ENCODE measurements at regions of chr19 and their contacts with region 1.

Region 1: GRCh38 chr19:38004521-38005223 is 97.7 kb downstream of the SIPA1L3 start:
- DNase-seq: peak; percentile 81
- ATAC-seq: peak; percentile 85
- H3K4me3 ChIP-seq: peak overlapping the region; percentile 42 to 51
- H3K27ac ChIP-seq: peak overlapping the region; percentile 85
- H3K4me1 ChIP-seq: peaks cover 39 to 66% of the 10 kb centered on the region in 2 experiments
- H3K27me3 ChIP-seq: no peaks in the 10 kb centered on the region
- CTCF ChIP-seq: no peak
- POLR2A ChIP-seq: peak; percentile 77
- RAD21 ChIP-seq: no peak

Region 2: GRCh38 chr19:37931881-37932655 is 72.6 kb before region 1 on chr19:
- CTCF ChIA-PET with region 1: no interaction called
- POLR2A ChIA-PET with region 1: interaction called, 18 read pairs
- RAD21 ChIA-PET with region 1: interaction called in 1 of 2 experiments, 6 read pairs
- intact Hi-C with region 1: no loop called
- DNase-seq: peak; percentile 65
- ATAC-seq: peak; percentile 81
- H3K4me3 ChIP-seq: peak overlapping the region; percentile 30 to 49
- H3K27ac ChIP-seq: peak overlapping the region; percentile 88
- H3K4me1 ChIP-seq: peaks cover 61 to 87% of the 10 kb centered on the region in 2 experiments
- H3K27me3 ChIP-seq: no peaks in the 10 kb centered on the region
- CTCF ChIP-seq: no peak
- POLR2A ChIP-seq: no peak
- RAD21 ChIP-seq: peak; percentile 39; the same call in 1 of the 2 replicates

Region 3: GRCh38 chr19:37987356-37988332 is 17.0 kb before region 1 on chr19:
- CTCF ChIA-PET with region 1: interaction called, 4 read pairs
- POLR2A ChIA-PET with region 1: interaction called, 17 read pairs
- RAD21 ChIA-PET with region 1: no interaction called
- intact Hi-C with region 1: no loop called
- DNase-seq: no peak
- ATAC-seq: peak; percentile 73
- H3K4me3 ChIP-seq: no peak overlapping the region
- H3K27ac ChIP-seq: no peak overlapping the region
- H3K4me1 ChIP-seq: peaks cover 17 to 74% of the 10 kb centered on the region in 2 experiments
- H3K27me3 ChIP-seq: no peaks in the 10 kb centered on the region
- CTCF ChIP-seq: peak; percentile 51 to 64 (median 64); a peak in 5 of 6 replicates
- POLR2A ChIP-seq: no peak
- RAD21 ChIP-seq: peak; percentile 51

Region 4: GRCh38 chr19:37992761-37993160 is 11.9 kb before region 1 on chr19:
- CTCF ChIA-PET with region 1: interaction called, 4 read pairs
- POLR2A ChIA-PET with region 1: interaction called, 17 read pairs
- RAD21 ChIA-PET with region 1: no interaction called
- intact Hi-C with region 1: no loop called
- DNase-seq: no peak
- ATAC-seq: no peak
- H3K4me3 ChIP-seq: no peak overlapping the region
- H3K27ac ChIP-seq: no peak overlapping the region
- H3K4me1 ChIP-seq: peaks cover 19 to 68% of the 10 kb centered on the region in 2 experiments
- H3K27me3 ChIP-seq: no peaks in the 10 kb centered on the region
- CTCF ChIP-seq: no peak
- POLR2A ChIP-seq: no peak
- RAD21 ChIP-seq: no peak

Region 5: GRCh38 chr19:38020311-38020710 is 15.6 kb after region 1 on chr19:
- CTCF ChIA-PET with region 1: no interaction called
- POLR2A ChIA-PET with region 1: interaction called, 12 read pairs
- RAD21 ChIA-PET with region 1: no interaction called
- intact Hi-C with region 1: no loop called
- DNase-seq: no peak
- ATAC-seq: no peak
- H3K4me3 ChIP-seq: no peak overlapping the region
- H3K27ac ChIP-seq: no peak overlapping the region
- H3K4me1 ChIP-seq: peaks cover 8 to 31% of the 10 kb centered on the region in 2 experiments
- H3K27me3 ChIP-seq: no peaks in the 10 kb centered on the region
- CTCF ChIP-seq: no peak
- POLR2A ChIP-seq: no peak
- RAD21 ChIP-seq: no peak